Astrocyte of the cerebellum (primary cell): ENCODE measurements at regions of chr7 and their contacts with region 1.

Region 1: DNA sequence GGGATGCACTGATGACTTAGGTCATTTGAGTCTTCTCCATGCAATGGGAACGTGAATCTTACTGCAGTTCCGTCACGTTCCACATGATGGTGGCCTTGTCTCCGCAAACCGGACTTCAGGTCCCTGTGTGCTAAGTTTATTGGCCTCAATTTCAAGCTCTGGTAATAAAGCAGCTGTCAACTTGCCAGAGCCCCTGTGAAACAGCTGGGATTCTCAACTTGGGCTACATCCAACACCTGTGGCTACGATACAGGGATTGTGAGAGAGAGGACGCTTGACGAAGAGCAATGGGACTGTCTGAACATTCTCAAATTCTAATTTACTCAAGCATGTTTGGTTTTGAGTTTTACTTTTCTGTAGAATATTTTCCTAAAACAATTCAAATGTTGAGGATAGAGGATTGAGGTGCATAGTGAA is 174.2 kb downstream of the PTN start:
- DNase-seq: peak; percentile 80
- H3K4me3 ChIP-seq: no peak overlapping the region
- CTCF ChIP-seq: peak; percentile 87

Region 2: DNA sequence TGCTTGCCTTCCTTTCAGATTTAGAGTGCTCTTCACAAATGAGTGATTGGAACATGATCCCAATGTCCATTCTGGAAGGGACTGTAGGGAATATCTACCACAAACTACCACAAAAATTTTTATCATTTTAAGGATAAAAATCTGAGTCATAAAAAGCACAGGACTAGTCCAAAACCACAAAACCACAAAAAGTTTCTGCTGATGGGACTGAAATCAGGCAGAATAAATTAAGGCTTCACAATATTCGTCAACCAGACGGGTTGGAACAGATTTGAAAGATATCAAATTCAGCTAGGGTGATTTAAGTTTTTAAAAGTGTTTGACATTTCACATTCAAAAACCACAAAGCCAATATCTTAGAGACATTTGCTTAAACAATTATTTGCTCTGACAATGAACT is 274.3 kb after region 1 on chr7:
- in situ Hi-C with region 1: loop called (anchors 10 kb)
- DNase-seq: peak; percentile 89
- H3K4me3 ChIP-seq: no peak overlapping the region
- CTCF ChIP-seq: no peak